ENCODE measurements at regions of chr11 and their contacts with region 1.

Region 1: DNA sequence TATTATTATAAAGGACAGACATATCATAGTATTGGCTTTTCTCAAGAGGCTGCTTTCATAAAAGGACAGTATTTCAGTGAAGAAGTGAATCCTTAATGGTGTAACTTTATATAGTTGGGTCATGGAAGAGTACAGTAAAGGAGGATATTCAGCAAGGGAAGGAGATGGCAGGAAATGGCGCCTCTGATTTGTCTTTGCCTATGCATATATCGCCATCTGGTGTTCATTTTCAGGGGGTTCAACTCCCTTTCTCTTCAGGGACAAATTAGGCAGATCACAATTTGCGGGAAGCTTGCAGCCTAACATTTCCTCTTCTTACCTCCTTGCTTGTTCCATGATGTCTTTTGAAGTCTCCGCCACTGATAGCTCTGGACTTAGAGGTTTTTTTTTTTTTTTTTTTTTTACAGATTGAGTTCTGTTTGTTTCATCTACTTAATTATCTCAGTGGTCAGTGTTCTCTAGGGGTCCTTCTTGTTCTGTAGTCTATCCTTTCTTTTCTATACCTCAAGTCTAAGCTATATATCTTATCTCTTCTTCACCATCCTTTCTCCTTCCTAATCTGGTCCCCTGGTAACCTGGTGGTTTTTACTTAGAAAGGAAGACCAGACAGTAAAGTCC is 21.8 kb upstream of the RRM1 start:
- DNase-seq: peak in 29 of 35 experiments; percentile 22 to 87 (median 40)
- ATAC-seq: peak; percentile 79 to 83 (median 80)
- H3K4me3 ChIP-seq: no peak overlapping the region
- H3K4me3 Mint-ChIP-seq: no peak overlapping the region
- H3K27ac ChIP-seq: peak overlapping the region; percentile 44
- H3K27ac Mint-ChIP-seq: peak overlapping the region; percentile 80 to 90
- H3K4me1 ChIP-seq: peaks cover 17 to 20% of the 10 kb centered on the region in 2 experiments
- H3K4me1 Mint-ChIP-seq: peaks cover 55 to 67% (median 56%) of the 10 kb centered on the region in 3 donors
- H3K27me3 ChIP-seq: no peaks in the 10 kb centered on the region
- H3K27me3 Mint-ChIP-seq: no peaks in the 10 kb centered on the region

Region 2: DNA sequence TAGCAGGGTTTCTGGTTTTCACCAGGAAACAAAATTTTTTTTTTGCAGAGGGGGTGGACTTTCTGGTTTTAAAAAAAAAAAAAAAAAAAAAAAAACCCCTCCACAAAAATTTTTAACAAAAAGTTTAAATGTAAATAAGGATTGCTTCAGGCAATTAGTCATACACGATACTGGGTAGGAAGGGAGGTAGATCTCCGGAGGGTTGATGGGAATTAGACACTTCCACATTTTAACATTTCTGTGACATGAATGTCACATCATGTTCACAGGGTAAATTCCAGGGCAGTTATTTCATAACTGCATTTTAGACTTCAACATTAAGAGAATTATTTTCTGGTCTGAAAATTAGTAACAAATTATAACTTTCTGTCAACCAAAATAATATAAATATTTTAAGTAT is 291.4 kb before region 1 on chr11:
- CTCF ChIA-PET with region 1: interaction called, 5 to 14 read pairs
- POLR2A ChIA-PET with region 1: interaction called in 1 of 2 experiments, 4 read pairs
- DNase-seq: no peak
- ATAC-seq: no peak
- H3K4me3 ChIP-seq: no peak overlapping the region
- H3K4me3 Mint-ChIP-seq: no peak overlapping the region
- H3K27ac ChIP-seq: no peak overlapping the region
- H3K27ac Mint-ChIP-seq: peak overlapping the region in 1 of 2 donors; percentile 19
- H3K4me1 ChIP-seq: peaks cover 7 to 28% of the 10 kb centered on the region in 2 experiments
- H3K4me1 Mint-ChIP-seq: peaks cover 46 to 51% (median 48%) of the 10 kb centered on the region in 3 donors
- H3K27me3 ChIP-seq: no peaks in the 10 kb centered on the region
- H3K27me3 Mint-ChIP-seq: no peaks in the 10 kb centered on the region

Region 3: DNA sequence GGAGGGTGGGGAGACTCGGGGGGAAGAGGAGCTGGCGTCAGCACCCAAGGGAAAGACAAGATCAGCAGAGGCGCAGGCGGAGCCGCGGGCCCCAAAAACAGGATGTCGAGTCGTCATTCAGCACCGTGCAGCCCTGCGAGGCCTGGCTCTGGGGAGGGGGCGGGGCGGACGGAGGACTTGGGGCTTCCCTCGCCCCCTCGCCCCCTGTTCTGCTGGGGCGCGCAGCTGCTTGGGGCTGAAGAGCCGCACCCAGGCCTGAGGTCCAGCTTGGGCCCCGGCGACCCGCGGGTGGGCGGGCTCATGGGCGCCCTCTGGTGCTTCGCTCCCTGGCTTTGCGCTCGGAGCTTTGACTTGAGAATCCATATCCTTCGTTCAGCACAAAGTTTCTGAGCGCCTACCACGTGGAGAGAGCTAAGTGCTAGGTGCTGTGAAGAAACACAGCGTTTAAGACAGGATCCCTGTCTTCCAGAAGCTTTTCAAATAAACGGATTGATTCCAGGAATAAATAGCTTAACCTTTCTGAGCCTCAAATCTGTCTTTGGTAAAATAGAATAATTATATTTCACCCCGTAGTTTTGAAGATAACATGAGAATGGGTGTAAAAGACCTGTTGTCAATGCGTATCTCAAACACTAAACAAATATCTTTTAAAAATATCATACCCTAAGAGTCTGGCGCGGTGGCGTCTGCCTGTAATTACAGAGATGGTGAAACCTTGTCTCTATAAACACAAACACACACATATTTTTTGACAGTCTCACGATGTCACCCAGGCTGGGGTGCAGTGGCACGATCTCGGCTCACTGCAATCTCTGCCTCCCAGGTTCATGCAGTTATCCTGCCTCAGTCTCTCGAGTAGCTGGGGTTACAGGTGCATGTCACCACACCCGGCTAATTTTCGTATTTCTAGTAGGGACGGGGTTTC is 231.1 kb before region 1 on chr11:
- CTCF ChIA-PET with region 1: interaction called, 5 to 37 read pairs
- POLR2A ChIA-PET with region 1: interaction called, 3 to 4 read pairs
- DNase-seq: peak in 34 of 35 experiments; percentile 88 to 98 (median 96)
- ATAC-seq: peak; percentile 77 to 82 (median 78)
- H3K4me3 ChIP-seq: peak overlapping the region in 1 of 2 donors; percentile 88
- H3K4me3 Mint-ChIP-seq: peak overlapping the region; percentile 85 to 89 (median 86)
- H3K27ac ChIP-seq: peak overlapping the region; percentile 98
- H3K27ac Mint-ChIP-seq: peak overlapping the region; percentile 96
- H3K4me1 ChIP-seq: peaks cover 44 to 48% of the 10 kb centered on the region in 2 experiments
- H3K4me1 Mint-ChIP-seq: peaks cover 56 to 60% (median 56%) of the 10 kb centered on the region in 3 donors
- H3K27me3 ChIP-seq: no peaks in the 10 kb centered on the region
- H3K27me3 Mint-ChIP-seq: no peaks in the 10 kb centered on the region

Region 4: GRCh38 chr11:3854977-3855807 is 217.6 kb before region 1 on chr11 and contains the start of gene STIM1:
- CTCF ChIA-PET with region 1: interaction called, 54 to 182 read pairs
- POLR2A ChIA-PET with region 1: interaction called, 5 to 21 read pairs
- DNase-seq: peak; percentile 92 to 99 (median 97)
- ATAC-seq: peak; percentile 73 to 80 (median 74)
- H3K4me3 ChIP-seq: peak within 1 kb of the TSS; percentile 85 to 94
- H3K4me3 Mint-ChIP-seq: peak within 1 kb of the TSS; percentile 95 to 99 (median 98)
- H3K27ac ChIP-seq: peak within 1 kb of the TSS; percentile 96
- H3K27ac Mint-ChIP-seq: peak within 1 kb of the TSS; percentile 99
- H3K4me1 ChIP-seq: peaks cover 55 to 61% of the 10 kb centered on the region in 2 experiments
- H3K4me1 Mint-ChIP-seq: peaks cover 60 to 74% (median 68%) of the 10 kb centered on the region in 3 donors
- H3K27me3 ChIP-seq: no peaks in the 10 kb centered on the region
- H3K27me3 Mint-ChIP-seq: no peaks in the 10 kb centered on the region
- total RNA-seq, gene STIM1: 87.6 to 139 (median 94.5) TPM

Region 5: GRCh38 chr11:3933165-3933628 is 139.6 kb before region 1 on chr11:
- CTCF ChIA-PET with region 1: no interaction called
- POLR2A ChIA-PET with region 1: interaction called in 1 of 2 experiments, 11 read pairs
- DNase-seq: no peak
- ATAC-seq: no peak
- H3K4me3 ChIP-seq: no peak overlapping the region
- H3K4me3 Mint-ChIP-seq: no peak overlapping the region
- H3K27ac ChIP-seq: no peak overlapping the region
- H3K27ac Mint-ChIP-seq: peak overlapping the region; percentile 80 to 85
- H3K4me1 ChIP-seq: peaks cover 8 to 22% of the 10 kb centered on the region in 2 experiments
- H3K4me1 Mint-ChIP-seq: peaks cover 70 to 84% (median 83%) of the 10 kb centered on the region in 3 donors
- H3K27me3 ChIP-seq: no peaks in the 10 kb centered on the region
- H3K27me3 Mint-ChIP-seq: no peaks in the 10 kb centered on the region

Region 6: DNA sequence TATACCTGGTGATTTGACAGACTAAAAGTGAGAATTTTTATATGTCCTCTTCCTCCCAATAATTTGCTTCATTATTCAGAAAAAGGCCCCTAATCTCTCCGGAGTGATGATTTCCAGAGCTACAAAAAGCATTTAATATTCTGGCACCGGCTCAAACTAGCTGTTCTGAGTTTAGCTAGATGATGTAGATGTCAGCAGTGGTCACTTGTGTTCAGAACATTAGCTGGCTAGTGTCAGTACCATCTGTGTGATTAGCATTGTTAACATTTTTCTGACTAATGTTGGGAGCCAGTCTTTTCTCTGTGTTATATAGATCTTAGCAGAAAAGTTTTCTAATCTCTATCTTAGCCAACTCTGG is 46.8 kb before region 1 on chr11:
- CTCF ChIA-PET with region 1: no interaction called
- POLR2A ChIA-PET with region 1: no interaction called
- DNase-seq: no peak
- ATAC-seq: no peak
- H3K4me3 ChIP-seq: no peak overlapping the region
- H3K4me3 Mint-ChIP-seq: no peak overlapping the region
- H3K27ac ChIP-seq: no peak overlapping the region
- H3K27ac Mint-ChIP-seq: no peak overlapping the region
- H3K4me1 ChIP-seq: no peaks in the 10 kb centered on the region
- H3K4me1 Mint-ChIP-seq: peaks cover 11 to 41% (median 35%) of the 10 kb centered on the region in 3 donors
- H3K27me3 ChIP-seq: no peaks in the 10 kb centered on the region
- H3K27me3 Mint-ChIP-seq: no peaks in the 10 kb centered on the region

Region 7: DNA sequence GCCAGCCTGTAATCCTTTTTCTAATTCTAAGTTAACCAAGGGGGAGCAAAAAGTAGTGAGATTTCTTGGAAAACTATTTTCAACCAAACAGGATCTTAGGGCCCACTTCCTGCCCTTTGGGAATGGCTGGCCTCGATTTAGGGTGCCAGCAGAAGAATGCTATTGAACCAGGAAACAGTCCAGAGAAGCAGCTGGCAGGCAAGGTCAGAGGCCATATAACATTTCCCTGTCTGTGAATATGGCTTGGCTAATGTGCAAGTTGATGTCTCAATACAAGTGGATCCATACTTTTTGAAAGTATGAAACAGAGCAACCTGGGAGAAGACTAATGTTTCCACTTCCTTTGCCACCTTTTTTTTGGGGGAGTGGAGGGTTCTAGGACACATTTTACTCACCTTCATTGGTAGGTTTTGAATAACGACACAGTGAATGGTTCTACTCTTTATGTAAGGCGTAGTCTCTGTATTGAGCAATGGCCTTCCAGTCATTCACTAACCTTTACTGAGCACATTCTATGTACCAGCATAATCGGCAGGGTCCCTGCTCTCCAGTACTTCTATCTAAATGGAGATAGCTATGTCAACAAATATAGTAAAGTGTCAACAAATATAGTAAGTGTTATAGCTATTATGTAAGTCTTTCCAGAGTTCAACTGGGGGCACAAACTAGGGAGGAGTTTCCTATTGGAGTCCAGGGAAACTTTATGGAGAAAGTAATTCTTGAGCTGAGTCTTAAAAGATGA is 12.4 kb before region 1 on chr11:
- CTCF ChIA-PET with region 1: interaction called, 3 to 17 read pairs
- POLR2A ChIA-PET with region 1: interaction called, 4 to 11 read pairs
- DNase-seq: no peak
- ATAC-seq: no peak
- H3K4me3 ChIP-seq: no peak overlapping the region
- H3K4me3 Mint-ChIP-seq: no peak overlapping the region
- H3K27ac ChIP-seq: no peak overlapping the region
- H3K27ac Mint-ChIP-seq: peak overlapping the region; percentile 32 to 66
- H3K4me1 ChIP-seq: peaks cover 4 to 14% of the 10 kb centered on the region in 2 experiments
- H3K4me1 Mint-ChIP-seq: peaks cover 43 to 49% (median 47%) of the 10 kb centered on the region in 3 donors
- H3K27me3 ChIP-seq: no peaks in the 10 kb centered on the region
- H3K27me3 Mint-ChIP-seq: no peaks in the 10 kb centered on the region

Region 8: DNA sequence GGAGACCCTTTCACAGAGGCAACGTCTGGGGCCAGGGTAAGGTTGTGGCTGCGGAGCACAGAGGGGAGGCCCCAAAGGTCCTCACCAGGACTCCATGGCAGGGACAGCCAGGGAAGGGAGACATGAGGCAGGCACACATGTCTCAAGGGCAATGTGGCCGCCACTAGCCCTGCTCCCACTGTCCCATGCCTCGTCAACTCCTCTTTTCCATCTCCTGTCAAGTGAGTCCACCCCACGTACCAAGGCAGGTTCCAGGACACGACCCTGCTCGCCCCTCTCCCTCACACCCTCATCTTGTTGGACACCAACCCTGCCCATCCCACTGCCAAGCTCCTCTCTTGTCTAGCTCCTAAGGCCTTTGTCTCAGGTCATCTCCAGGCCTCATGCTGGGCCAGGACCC is 95.0 kb after region 1 on chr11:
- CTCF ChIA-PET with region 1: no interaction called
- POLR2A ChIA-PET with region 1: no interaction called
- DNase-seq: no peak
- ATAC-seq: no peak
- H3K4me3 ChIP-seq: no peak overlapping the region
- H3K4me3 Mint-ChIP-seq: no peak overlapping the region
- H3K27ac ChIP-seq: no peak overlapping the region
- H3K27ac Mint-ChIP-seq: no peak overlapping the region
- H3K4me1 ChIP-seq: no peaks in the 10 kb centered on the region
- H3K4me1 Mint-ChIP-seq: no peaks in the 10 kb centered on the region
- H3K27me3 ChIP-seq: peaks cover 0 to 4% of the 10 kb centered on the region in 2 experiments
- H3K27me3 Mint-ChIP-seq: no peaks in the 10 kb centered on the region

Measured in T-cell (primary cell).